Tibial artery (tissue), 4 donors: ENCODE measurements at regions of chr10 and their contacts with region 1.

Region 1: GRCh38 chr10:27155066-27155754 is at the start of gene MASTL:
- DNase-seq: peak; percentile 95 to 96
- H3K4me3 ChIP-seq: peak within 1 kb of the TSS; percentile 61 to 94
- H3K27ac ChIP-seq: peak within 1 kb of the TSS; percentile 95 to 100
- H3K4me1 ChIP-seq: peaks cover 0 to 37% (median 14%) of the 10 kb centered on the region in 4 donors
- H3K27me3 ChIP-seq: no peaks in the 10 kb centered on the region
- CTCF ChIP-seq: no peak

Region 2: DNA sequence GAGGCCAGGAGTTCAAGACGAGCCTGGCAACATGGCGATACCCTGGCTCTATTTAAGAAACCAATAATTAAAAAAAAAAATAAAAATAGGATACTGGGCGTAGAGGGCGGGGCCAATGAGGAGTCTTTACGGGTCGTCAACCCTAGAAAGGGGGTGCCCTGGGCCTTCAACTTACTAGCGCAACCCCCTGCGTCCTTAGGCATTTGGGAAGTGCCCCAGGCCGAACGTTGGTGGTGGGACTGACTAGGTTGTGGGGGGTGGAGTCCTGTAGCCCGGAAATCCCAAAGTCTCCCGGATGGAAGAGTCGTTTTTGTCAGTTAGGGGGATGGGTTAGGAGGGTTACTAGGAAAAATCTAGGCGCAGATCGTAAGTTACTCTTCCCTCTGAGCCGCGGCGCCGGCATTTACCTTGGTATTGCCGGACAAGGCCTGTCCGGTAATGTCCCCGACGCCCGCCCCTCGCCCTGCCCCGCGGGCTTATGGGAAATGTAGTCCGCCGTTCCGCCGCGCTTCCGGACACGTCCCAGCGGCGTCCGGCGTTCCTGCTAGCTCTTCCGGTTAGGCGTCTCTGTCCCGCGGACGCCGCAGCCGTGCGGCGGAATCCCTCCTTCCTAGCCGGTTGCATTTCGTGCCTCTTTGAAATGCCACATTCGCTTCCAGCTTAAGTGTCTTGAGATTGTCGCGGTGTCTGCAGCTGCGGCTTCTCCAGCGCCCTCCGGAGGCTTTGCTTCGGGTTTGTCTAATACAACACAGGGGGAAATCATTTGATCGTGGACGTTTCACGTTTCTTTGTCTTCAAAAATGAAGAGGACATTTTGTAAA is 86.7 kb after region 1 on chr10:
- intact Hi-C with region 1: loop called (anchors 5 kb)
- DNase-seq: peak; percentile 88 to 95
- H3K4me3 ChIP-seq: peak overlapping the region; percentile 80
- H3K27ac ChIP-seq: peak overlapping the region; percentile 96 to 98
- H3K4me1 ChIP-seq: peaks cover 5 to 27% (median 18%) of the 10 kb centered on the region in 4 donors
- H3K27me3 ChIP-seq: no peaks in the 10 kb centered on the region
- CTCF ChIP-seq: peak; percentile 41 to 58

Region 3: GRCh38 chr10:27504007-27504807 is 349.0 kb after region 1 on chr10 and contains the start of gene RAB18:
- intact Hi-C with region 1: loop called (anchors 5 kb)
- DNase-seq: peak; percentile 97 to 99
- H3K4me3 ChIP-seq: peak within 1 kb of the TSS; percentile 79 to 91
- H3K27ac ChIP-seq: peak within 1 kb of the TSS; percentile 85 to 90
- H3K4me1 ChIP-seq: peaks cover 0 to 39% (median 18%) of the 10 kb centered on the region in 4 donors
- H3K27me3 ChIP-seq: no peaks in the 10 kb centered on the region
- CTCF ChIP-seq: peak in 1 of 2 experiments; percentile 4